ENCODE measurements at regions of chr22 and their contacts with region 1.

Region 1: DNA sequence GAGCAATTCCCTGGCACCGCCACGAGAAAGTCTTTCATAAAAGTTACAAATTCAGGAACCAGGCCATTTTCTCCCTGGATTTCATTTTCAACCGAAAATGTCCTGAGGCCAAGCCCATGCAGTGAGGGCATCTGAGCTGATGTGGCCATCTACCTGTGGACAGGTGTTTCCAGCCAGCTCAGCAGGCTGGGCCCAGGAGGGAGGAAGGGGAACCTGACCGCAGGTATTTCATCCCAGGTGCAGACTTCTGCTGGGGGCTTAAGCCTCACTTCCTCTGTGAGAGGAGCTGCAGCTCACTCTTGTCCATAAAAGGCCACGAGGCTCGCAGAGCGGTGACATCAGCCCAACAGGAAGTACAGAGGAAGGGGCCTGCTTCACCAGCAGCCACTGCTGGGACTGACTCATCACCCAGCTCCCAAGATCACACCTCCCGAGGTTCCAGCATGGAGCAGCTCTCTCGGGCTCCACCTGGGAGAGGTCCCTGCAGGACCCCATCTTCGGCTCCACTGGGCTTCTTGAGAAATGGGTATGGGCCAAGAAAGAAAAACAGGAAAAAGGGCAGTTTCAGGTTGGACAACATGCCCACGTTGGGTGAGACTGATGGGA is 56.4 kb downstream of the MYH9 start:
- DNase-seq: peak; percentile 81
- ATAC-seq: peak; percentile 83
- H3K4me3 ChIP-seq: peak overlapping the region; percentile 59; the same call in 1 of the 2 replicates
- H3K27ac ChIP-seq: peak overlapping the region; percentile 99
- H3K4me1 ChIP-seq: peaks cover 59% of the 10 kb centered on the region
- H3K27me3 ChIP-seq: no peaks in the 10 kb centered on the region
- CTCF ChIP-seq: no peak
- EP300 ChIP-seq: peak in 1 of 2 experiments; percentile 77; a peak in 2 of 4 replicates
- POLR2A ChIP-seq: peak; percentile 58
- RAD21 ChIP-seq: no peak

Region 2: GRCh38 chr22:36359181-36359996 is 28.0 kb after region 1 on chr22:
- CTCF ChIA-PET with region 1: interaction called, 10 read pairs
- POLR2A ChIA-PET with region 1: interaction called, 18 read pairs
- RAD21 ChIA-PET with region 1: interaction called, 10 read pairs
- SMC1A ChIA-PET with region 1: interaction called, 24 read pairs
- in situ Hi-C with region 1: no loop called
- intact Hi-C with region 1: no loop called
- DNase-seq: peak; percentile 86
- ATAC-seq: peak; percentile 88
- H3K4me3 ChIP-seq: no peak overlapping the region
- H3K27ac ChIP-seq: peak overlapping the region; percentile 39
- H3K4me1 ChIP-seq: peaks cover 90% of the 10 kb centered on the region
- H3K27me3 ChIP-seq: no peaks in the 10 kb centered on the region
- CTCF ChIP-seq: no peak
- EP300 ChIP-seq: peak; percentile 75 to 76; a peak in 2 of 4 replicates
- POLR2A ChIP-seq: no peak
- RAD21 ChIP-seq: no peak

Region 3: DNA sequence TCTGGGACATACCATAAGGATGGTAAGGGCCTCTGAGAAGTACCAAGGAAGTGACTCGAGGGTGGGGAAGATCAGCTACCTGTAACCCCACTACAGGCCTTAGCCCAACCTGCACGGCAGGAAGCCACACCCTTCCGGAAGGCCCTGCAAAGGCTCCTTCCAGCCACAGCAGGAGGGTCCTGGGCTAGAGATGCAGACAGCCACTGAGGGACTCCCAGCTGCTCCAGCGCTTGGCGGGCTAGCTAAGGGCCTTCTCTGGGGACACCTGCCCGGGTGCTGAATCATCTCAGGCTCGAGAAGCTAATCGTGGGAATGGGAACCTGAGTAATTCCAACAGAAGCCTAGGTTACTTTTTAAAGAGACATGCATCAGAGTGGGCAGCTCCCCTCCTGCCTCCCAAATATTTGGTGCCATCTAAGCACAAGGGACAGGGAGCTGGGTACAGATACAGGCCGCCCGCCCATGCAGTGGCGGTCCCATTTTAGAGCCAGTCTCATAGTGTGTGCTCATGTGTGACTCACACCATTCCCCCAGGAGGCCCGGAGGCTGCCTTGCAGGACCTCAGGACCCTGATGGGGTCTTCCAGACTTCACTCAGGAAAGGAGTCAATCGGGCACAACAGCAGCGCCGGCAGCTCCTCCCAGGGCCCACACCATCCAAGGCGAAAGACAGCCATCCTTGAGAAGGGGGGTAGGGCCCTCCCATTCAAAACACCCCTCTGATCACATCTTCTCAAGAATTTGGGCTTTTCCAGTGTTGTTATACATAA is 48.4 kb after region 1 on chr22:
- CTCF ChIA-PET with region 1: interaction called, 11 read pairs
- POLR2A ChIA-PET with region 1: interaction called, 53 read pairs
- RAD21 ChIA-PET with region 1: interaction called, 40 read pairs
- SMC1A ChIA-PET with region 1: interaction called, 23 read pairs
- in situ Hi-C with region 1: no loop called
- intact Hi-C with region 1: no loop called
- DNase-seq: no peak
- ATAC-seq: peak; percentile 47
- H3K4me3 ChIP-seq: peak overlapping the region; percentile 70
- H3K27ac ChIP-seq: peak overlapping the region; percentile 78
- H3K4me1 ChIP-seq: peaks cover 70% of the 10 kb centered on the region
- H3K27me3 ChIP-seq: no peaks in the 10 kb centered on the region
- CTCF ChIP-seq: no peak
- EP300 ChIP-seq: no peak
- POLR2A ChIP-seq: peak; percentile 51
- RAD21 ChIP-seq: no peak

Region 4: GRCh38 chr22:36415415-36416168 is 84.2 kb after region 1 on chr22:
- CTCF ChIA-PET with region 1: no interaction called
- POLR2A ChIA-PET with region 1: interaction called, 12 read pairs
- RAD21 ChIA-PET with region 1: no interaction called
- SMC1A ChIA-PET with region 1: no interaction called
- in situ Hi-C with region 1: no loop called
- intact Hi-C with region 1: no loop called
- DNase-seq: no peak
- ATAC-seq: no peak
- H3K4me3 ChIP-seq: no peak overlapping the region
- H3K27ac ChIP-seq: no peak overlapping the region; the same call in 1 of the 2 replicates
- H3K4me1 ChIP-seq: peaks cover 27% of the 10 kb centered on the region
- H3K27me3 ChIP-seq: no peaks in the 10 kb centered on the region
- CTCF ChIP-seq: no peak
- EP300 ChIP-seq: no peak
- POLR2A ChIP-seq: no peak
- RAD21 ChIP-seq: no peak